Heart right ventricle (tissue), 16 donors: ENCODE measurements at regions of chr6 and their contacts with region 1.

Region 1: GRCh38 chr6:156776840-156777576 is at the start of gene ARID1B:
- DNase-seq: peak; percentile 84 to 87
- ATAC-seq: peak; percentile 69 to 83 (median 80)
- H3K4me3 ChIP-seq: peak within 1 kb of the TSS; percentile 67 to 87 (median 78)
- H3K27ac ChIP-seq: peak within 1 kb of the TSS; percentile 96 to 99 (median 98)
- H3K4me1 ChIP-seq: peaks cover 0 to 43% (median 36%) of the 10 kb centered on the region in 9 donors
- H3K27me3 ChIP-seq: no peaks in the 10 kb centered on the region
- CTCF ChIP-seq: no peak
- total RNA-seq, gene ARID1B: 39.0 to 63.2 (median 53.0) TPM

Region 2: GRCh38 chr6:156612361-156612760 is 164.6 kb before region 1 on chr6:
- intact Hi-C with region 1: no loop called
- DNase-seq: no peak
- ATAC-seq: no peak
- H3K4me3 ChIP-seq: no peak overlapping the region
- H3K27ac ChIP-seq: no peak overlapping the region
- H3K4me1 ChIP-seq: peaks cover 0 to 2% (median 0%) of the 10 kb centered on the region in 9 donors
- H3K27me3 ChIP-seq: peaks cover 0 to 9% (median 0%) of the 10 kb centered on the region in 7 donors
- CTCF ChIP-seq: no peak

Region 3: GRCh38 chr6:156657296-156657695 is 119.7 kb before region 1 on chr6:
- intact Hi-C with region 1: no loop called
- DNase-seq: peak; percentile 11 to 28
- ATAC-seq: peak in 7 of 8 donors; percentile 36 to 90 (median 69)
- H3K4me3 ChIP-seq: no peak overlapping the region
- H3K27ac ChIP-seq: peak overlapping the region in 1 of 10 donors; percentile 30
- H3K4me1 ChIP-seq: peaks cover 5 to 26% (median 20%) of the 10 kb centered on the region in 9 donors
- H3K27me3 ChIP-seq: no peaks in the 10 kb centered on the region
- CTCF ChIP-seq: no peak

Region 4: GRCh38 chr6:156686995-156687788 is 89.8 kb before region 1 on chr6:
- intact Hi-C with region 1: loop called (anchors 1 to 5 kb)
- DNase-seq: peak; percentile 90 to 91
- ATAC-seq: peak; percentile 95 to 99 (median 96)
- H3K4me3 ChIP-seq: peak overlapping the region; percentile 59 to 94 (median 72)
- H3K27ac ChIP-seq: peak overlapping the region; percentile 87 to 100 (median 98)
- H3K4me1 ChIP-seq: peaks cover 0 to 19% (median 11%) of the 10 kb centered on the region in 9 donors
- H3K27me3 ChIP-seq: no peaks in the 10 kb centered on the region
- CTCF ChIP-seq: no peak

Region 5: DNA sequence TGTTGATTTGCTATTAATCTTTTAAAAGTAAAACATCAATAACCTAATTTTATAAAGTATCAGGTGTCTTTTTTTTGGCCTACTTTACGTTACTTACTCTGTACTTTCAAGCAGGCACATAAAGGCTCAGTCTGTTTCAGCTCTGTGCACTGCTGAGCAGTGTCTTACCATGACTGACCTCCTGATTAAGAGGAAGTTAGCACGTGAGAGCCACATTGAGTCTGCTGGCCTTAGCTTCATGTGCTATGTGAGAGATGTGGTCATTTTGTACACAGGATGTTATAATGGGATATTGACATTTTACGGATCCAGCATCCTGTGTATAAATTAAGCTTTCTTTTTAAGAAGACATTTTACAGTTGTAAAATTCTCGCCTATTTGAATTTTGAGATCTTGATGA is 32.0 kb after region 1 on chr6:
- intact Hi-C with region 1: no loop called
- DNase-seq: no peak
- ATAC-seq: peak; percentile 56 to 84 (median 82)
- H3K4me3 ChIP-seq: no peak overlapping the region
- H3K27ac ChIP-seq: peak overlapping the region in 2 of 10 donors; percentile 9 to 13
- H3K4me1 ChIP-seq: peaks cover 12 to 69% (median 50%) of the 10 kb centered on the region in 9 donors
- H3K27me3 ChIP-seq: no peaks in the 10 kb centered on the region
- CTCF ChIP-seq: no peak

Region 6: DNA sequence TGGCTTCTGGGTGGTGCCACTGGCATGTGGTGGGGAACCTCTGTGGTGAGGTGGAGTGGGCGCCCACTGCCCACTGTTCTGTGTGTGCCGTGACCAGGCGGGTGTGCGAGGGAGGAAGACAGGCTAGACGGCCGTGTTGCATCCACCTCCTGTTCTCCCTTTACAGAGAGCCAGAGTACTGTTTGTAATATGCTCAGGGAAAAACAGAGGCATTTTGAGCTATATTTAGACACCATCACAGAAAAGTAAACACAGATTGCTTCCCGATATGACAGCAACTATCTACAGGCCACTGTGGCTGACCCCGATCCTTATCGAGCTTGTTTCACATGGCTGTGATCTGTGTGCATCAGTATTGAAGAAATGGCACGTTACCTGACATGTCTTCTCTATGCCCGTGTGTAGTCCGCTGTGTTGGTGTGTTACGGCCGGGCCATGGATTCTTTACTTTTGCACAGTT is 45.8 kb after region 1 on chr6:
- intact Hi-C with region 1: loop called in 1 of 10 experiments (anchors 5 kb)
- DNase-seq: no peak
- ATAC-seq: peak in 6 of 8 donors; percentile 45 to 71 (median 60)
- H3K4me3 ChIP-seq: peak overlapping the region in 2 of 10 donors; percentile 2 to 17
- H3K27ac ChIP-seq: peak overlapping the region in 6 of 10 donors; percentile 0 to 34 (median 25)
- H3K4me1 ChIP-seq: peaks cover 7 to 99% (median 78%) of the 10 kb centered on the region in 9 donors
- H3K27me3 ChIP-seq: no peaks in the 10 kb centered on the region
- CTCF ChIP-seq: no peak

Region 7: GRCh38 chr6:156876302-156876701 is 99.3 kb after region 1 on chr6:
- intact Hi-C with region 1: loop called in 1 of 10 experiments (anchors 10 kb)
- DNase-seq: peak in 1 of 2 donors; percentile 47
- ATAC-seq: peak in 6 of 8 donors; percentile 18 to 63 (median 44)
- H3K4me3 ChIP-seq: no peak overlapping the region
- H3K27ac ChIP-seq: peak overlapping the region in 1 of 10 donors; percentile 17
- H3K4me1 ChIP-seq: peaks cover 2 to 80% (median 55%) of the 10 kb centered on the region in 9 donors
- H3K27me3 ChIP-seq: no peaks in the 10 kb centered on the region
- CTCF ChIP-seq: peak in 8 of 9 donors; percentile 5 to 50 (median 34)

Region 8: DNA sequence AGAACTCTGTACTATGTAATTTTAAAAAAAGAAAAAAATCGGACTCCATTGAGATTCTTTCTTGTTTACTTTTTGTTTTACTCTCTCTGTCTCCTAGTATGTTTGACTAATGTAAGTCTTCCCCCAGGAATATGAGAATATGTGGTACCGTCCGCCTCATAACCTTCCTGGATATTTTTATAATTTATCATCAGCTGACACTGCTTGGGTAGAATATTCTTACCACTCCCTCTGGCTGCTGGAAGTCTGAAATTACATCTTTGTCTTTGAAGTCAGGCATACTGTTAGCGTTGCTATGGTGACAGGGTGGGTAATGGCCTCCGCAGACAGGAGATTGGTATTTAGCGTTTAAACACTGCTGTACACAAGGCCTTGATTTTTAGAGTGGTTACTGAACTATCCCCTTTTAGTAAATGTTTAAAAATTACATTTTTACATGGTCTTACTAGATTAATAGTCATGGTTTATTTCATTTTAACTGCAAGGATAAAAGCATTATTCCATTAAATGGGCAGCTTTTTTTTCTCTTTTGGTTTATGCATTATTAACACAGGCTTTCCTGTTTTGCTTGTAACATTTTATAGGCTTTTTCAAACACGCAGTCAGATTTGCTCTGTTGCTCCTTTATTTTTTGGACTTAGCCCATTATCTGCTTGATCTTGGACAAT is 176.6 kb after region 1 on chr6:
- intact Hi-C with region 1: loop called in 6 of 10 experiments (anchors 5 to 10 kb)
- DNase-seq: peak in 1 of 2 donors; percentile 68
- ATAC-seq: peak; percentile 62 to 88 (median 79)
- H3K4me3 ChIP-seq: peak overlapping the region in 6 of 10 donors; percentile 6 to 23 (median 14)
- H3K27ac ChIP-seq: peak overlapping the region in 9 of 10 donors; percentile 8 to 75 (median 36)
- H3K4me1 ChIP-seq: peaks cover 15 to 97% (median 87%) of the 10 kb centered on the region in 9 donors
- H3K27me3 ChIP-seq: no peaks in the 10 kb centered on the region
- CTCF ChIP-seq: peak in 7 of 9 donors; percentile 38 to 71 (median 44)

Region 9: GRCh38 chr6:157184202-157185020 is 407.4 kb after region 1 on chr6:
- intact Hi-C with region 1: loop called in 2 of 10 experiments (anchors 10 kb)
- DNase-seq: peak; percentile 63 to 72
- ATAC-seq: peak; percentile 66 to 87 (median 76)
- H3K4me3 ChIP-seq: peak overlapping the region in 2 of 10 donors; percentile 20 to 23
- H3K27ac ChIP-seq: peak overlapping the region in 2 of 10 donors; percentile 5 to 24
- H3K4me1 ChIP-seq: peaks cover 0 to 42% (median 23%) of the 10 kb centered on the region in 9 donors
- H3K27me3 ChIP-seq: no peaks in the 10 kb centered on the region
- CTCF ChIP-seq: peak; percentile 77 to 93 (median 90)